ENCODE measurements at regions of chr11 and their contacts with region 1.

Region 1: DNA sequence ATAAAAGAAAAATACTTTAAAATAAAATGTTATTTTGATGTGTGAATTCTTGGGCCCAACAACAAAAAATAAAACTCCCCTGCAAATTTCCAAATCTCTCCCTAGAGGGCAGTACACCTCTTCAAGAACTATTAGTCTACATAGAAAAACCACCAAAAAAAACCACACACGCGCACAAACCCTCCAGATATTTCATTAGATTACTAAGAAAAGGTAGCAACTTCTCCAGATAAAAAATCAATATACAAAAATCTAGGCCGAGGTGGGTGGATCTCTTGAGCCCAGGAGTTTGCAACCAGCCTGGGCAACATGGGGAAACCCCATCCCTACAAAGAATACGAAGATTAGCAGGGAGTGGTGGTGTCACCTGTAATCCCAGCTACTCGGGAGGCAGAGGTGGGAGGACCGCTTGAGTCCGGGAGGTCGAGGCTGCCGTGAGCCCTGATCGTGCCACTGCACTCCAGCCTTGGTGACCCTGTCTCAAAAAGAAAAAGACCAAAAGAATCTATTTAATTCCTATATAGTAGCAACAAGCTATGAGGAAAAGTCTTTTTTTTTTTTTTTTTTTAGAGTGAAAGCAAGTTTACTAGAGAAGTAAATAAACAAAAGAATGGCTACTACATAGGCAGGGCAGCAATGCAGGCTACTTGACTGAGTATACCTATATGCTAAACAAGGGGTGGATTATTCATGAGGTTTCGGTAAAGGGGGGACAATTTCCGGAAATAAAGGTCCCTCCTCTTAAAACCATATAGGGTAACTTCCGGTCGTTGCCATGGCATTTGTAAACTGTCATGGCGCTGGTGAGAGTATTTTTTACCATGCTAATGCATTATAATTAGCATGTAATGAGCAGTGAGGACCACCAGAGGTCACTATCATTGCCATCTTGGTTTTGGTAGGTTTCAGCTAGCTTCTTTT is 13.1 kb downstream of the B3GNT6 start:
- DNase-seq: peak; percentile 69 to 95
- ATAC-seq: peak; percentile 80 to 88
- H3K4me3 ChIP-seq: peak overlapping the region; percentile 55
- H3K27ac ChIP-seq: peak overlapping the region; percentile 64
- H3K4me1 ChIP-seq: peaks cover 12% of the 10 kb centered on the region; the same call in 2 of the 3 replicates
- CTCF ChIP-seq: peak; percentile 93
- EP300 ChIP-seq: no peak
- POLR2A ChIP-seq: no peak
- RAD21 ChIP-seq: peak; percentile 71 to 86

Region 2: DNA sequence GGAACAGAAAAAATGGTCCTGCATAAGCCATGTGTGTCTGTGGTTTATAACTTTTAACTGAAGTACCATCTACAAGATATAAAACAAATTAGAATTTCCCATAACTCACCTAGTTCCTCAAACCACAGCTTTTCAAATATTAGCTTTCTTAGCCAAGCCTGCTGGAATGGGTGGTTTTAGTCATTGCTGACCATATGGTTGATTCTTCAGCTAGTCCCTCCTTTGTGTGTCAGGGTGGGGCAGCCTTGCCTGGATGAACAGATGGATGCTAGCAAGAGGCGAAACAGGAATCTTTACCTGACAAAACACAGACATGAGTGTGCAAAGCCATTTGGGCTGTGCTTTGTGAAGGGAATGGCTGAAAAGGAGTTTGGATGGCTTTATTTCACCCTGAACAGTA is 20.0 kb before region 1 on chr11:
- CTCF ChIA-PET with region 1: interaction called, 11 read pairs
- POLR2A ChIA-PET with region 1: no interaction called
- DNase-seq: peak in 1 of 2 experiments; percentile 40
- ATAC-seq: peak in 1 of 2 experiments; percentile 22; a peak in 2 of 6 replicates
- H3K4me3 ChIP-seq: no peak overlapping the region
- H3K27ac ChIP-seq: 0 out of 6 replicates have a peak overlapping the region, but pooled peaks of 1 of the 2 experiments have one; percentile 1
- H3K4me1 ChIP-seq: peaks cover 22% of the 10 kb centered on the region
- CTCF ChIP-seq: no peak
- EP300 ChIP-seq: no peak
- POLR2A ChIP-seq: no peak
- RAD21 ChIP-seq: no peak

Region 3: DNA sequence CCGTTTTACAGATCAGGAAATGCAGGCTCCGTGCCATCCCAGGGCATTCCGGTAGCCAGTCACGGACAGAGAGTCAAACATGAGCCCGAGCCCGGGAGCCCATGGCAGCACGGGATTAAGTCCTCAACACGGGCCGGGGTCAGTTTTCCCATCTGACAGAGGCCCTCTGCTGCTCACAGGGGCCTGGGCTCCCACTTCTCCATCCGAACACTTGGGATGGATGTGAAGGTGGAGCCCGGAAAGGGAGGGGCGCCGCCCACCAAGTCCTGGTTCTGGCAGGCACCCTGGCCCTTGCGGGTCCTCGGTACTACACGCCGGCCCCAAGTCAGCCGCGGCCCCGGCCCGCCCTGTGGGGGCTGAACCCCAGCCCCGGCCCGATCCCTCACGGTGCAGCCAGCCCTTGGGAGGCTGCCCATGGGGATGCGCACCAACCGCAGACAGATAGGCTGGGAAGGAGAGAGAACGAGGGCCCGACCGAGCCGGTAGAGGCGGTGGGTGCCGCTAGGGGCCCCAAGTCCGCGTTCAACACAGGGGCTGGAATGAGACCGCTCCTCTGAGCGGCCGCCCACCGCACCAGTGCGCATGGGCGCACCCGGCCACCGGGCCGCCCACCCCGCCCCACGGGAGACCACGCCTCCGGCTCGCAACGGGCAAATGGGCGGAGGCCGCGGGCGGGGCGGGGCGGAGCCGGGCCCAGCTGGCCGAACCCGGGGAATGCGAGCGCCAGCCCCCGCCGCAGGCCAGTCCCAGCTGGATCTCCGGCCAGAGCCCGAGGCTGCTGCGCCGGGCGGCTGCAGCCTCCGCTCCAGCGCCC is 19.2 kb after region 1 on chr11 and contains the start of gene CAPN5:
- CTCF ChIA-PET with region 1: interaction called, 48 read pairs
- POLR2A ChIA-PET with region 1: interaction called, 5 read pairs
- DNase-seq: peak; percentile 89 to 95
- ATAC-seq: peak; percentile 89 to 97
- H3K4me3 ChIP-seq: peak within 1 kb of the TSS; percentile 65
- H3K27ac ChIP-seq: peak within 1 kb of the TSS; percentile 87 to 88
- H3K4me1 ChIP-seq: peaks cover 16% of the 10 kb centered on the region
- CTCF ChIP-seq: peak; percentile 38
- EP300 ChIP-seq: no peak
- POLR2A ChIP-seq: peak; percentile 72
- RAD21 ChIP-seq: peak in 1 of 2 experiments; percentile 26; a peak in 2 of 5 replicates
- polyA plus RNA-seq, gene CAPN5: 12.9 and 16.6 TPM in 2 replicates

Region 4: GRCh38 chr11:77082838-77083562 is 35.7 kb after region 1 on chr11:
- CTCF ChIA-PET with region 1: interaction called, 242 read pairs
- POLR2A ChIA-PET with region 1: no interaction called
- DNase-seq: no peak
- ATAC-seq: no peak
- H3K4me3 ChIP-seq: no peak overlapping the region
- H3K27ac ChIP-seq: no peak overlapping the region
- H3K4me1 ChIP-seq: no peaks in the 10 kb centered on the region
- CTCF ChIP-seq: no peak
- EP300 ChIP-seq: no peak
- POLR2A ChIP-seq: no peak
- RAD21 ChIP-seq: no peak

Region 5: GRCh38 chr11:77101052-77101537 is 53.8 kb after region 1 on chr11:
- CTCF ChIA-PET with region 1: interaction called, 14 read pairs
- POLR2A ChIA-PET with region 1: no interaction called
- DNase-seq: peak; percentile 56 to 57
- ATAC-seq: peak; percentile 27 to 75; a peak in 4 of 6 replicates
- H3K4me3 ChIP-seq: no peak overlapping the region
- H3K27ac ChIP-seq: no peak overlapping the region
- H3K4me1 ChIP-seq: peaks cover 6% of the 10 kb centered on the region
- CTCF ChIP-seq: peak; percentile 48
- EP300 ChIP-seq: no peak
- POLR2A ChIP-seq: no peak
- RAD21 ChIP-seq: peak in 1 of 2 experiments; percentile 21; a peak in 2 of 5 replicates

Region 6: DNA sequence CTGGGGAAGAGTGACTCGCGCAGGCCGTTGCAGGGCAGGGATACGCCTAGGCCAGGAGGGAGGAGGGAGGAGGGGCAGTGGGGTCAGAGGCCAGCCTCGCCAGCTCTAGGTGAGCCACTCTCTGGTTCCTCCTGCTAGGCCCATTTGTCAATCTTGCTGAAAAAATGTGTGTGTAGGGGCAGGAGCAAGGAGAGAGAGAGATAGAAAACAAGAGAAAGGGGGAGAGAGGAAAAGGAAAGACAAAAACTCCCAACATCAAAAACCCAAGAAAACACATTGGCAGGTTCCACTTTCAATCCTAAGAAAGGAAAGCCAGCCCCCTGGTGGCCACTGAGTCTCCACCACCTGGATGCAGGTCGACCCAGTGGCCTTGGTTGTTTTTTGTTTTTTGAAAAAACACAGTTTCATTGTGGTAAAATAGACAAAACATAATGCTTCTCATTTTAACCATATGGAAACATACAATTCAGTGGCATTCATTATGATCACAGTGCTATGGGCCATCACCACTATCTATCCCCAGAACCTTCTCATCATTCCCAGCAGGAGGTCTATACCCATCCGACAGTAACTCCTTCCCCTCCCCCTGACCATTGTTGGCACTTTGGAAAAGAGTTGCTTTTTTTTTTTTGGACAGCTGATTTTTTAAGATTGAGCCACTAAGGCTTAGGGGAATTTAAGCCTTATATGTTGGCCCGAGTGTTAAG is 66.3 kb after region 1 on chr11:
- CTCF ChIA-PET with region 1: interaction called, 50 read pairs
- POLR2A ChIA-PET with region 1: interaction called, 6 read pairs
- DNase-seq: peak; percentile 52 to 82
- ATAC-seq: peak; percentile 31 to 73; a peak in 3 of 6 replicates
- H3K4me3 ChIP-seq: no peak overlapping the region
- H3K27ac ChIP-seq: peak overlapping the region in 1 of 2 experiments; percentile 48; a peak in 2 of 6 replicates
- H3K4me1 ChIP-seq: peaks cover 31% of the 10 kb centered on the region
- CTCF ChIP-seq: peak; percentile 73
- EP300 ChIP-seq: no peak
- POLR2A ChIP-seq: no peak
- RAD21 ChIP-seq: peak; percentile 59 to 62

Region 7: DNA sequence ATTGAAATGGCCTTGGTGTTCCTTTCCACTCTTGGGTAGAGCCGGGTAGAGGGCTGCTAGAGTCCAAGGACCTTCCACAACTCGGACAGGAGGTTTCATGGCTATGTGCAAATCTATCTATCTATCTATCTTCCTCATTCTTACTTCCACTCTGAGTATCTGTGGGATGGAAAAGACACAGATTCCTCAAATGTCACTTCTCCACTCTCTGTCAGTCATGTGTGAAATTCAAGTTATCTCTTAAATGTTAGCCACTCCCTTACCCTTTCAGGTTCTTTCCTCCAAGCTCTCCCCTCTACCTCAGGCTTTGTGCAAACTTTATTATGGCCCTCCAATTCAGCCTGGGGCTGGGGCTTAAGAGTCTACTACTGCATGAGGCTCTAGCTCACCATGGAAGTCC is 169.9 kb after region 1 on chr11:
- CTCF ChIA-PET with region 1: no interaction called
- POLR2A ChIA-PET with region 1: no interaction called
- DNase-seq: no peak
- ATAC-seq: no peak
- H3K4me3 ChIP-seq: no peak overlapping the region
- H3K27ac ChIP-seq: no peak overlapping the region
- H3K4me1 ChIP-seq: no peaks in the 10 kb centered on the region
- CTCF ChIP-seq: no peak
- EP300 ChIP-seq: no peak
- POLR2A ChIP-seq: no peak
- RAD21 ChIP-seq: no peak

Region 8: GRCh38 chr11:77322506-77322905 is 275.2 kb after region 1 on chr11:
- CTCF ChIA-PET with region 1: no interaction called
- POLR2A ChIA-PET with region 1: no interaction called
- DNase-seq: no peak
- ATAC-seq: no peak
- H3K4me3 ChIP-seq: no peak overlapping the region
- H3K27ac ChIP-seq: no peak overlapping the region
- H3K4me1 ChIP-seq: no peaks in the 10 kb centered on the region
- CTCF ChIP-seq: no peak
- EP300 ChIP-seq: no peak
- POLR2A ChIP-seq: no peak
- RAD21 ChIP-seq: no peak